Calu3 (cell line): ENCODE measurements at regions of chr16 and their contacts with region 1.

Region 1: GRCh38 chr16:77374384-77374783 is 60.5 kb downstream of the ADAMTS18 start:
- DNase-seq: peak; percentile 21
- H3K4me3 Mint-ChIP-seq: no peak overlapping the region
- H3K27ac Mint-ChIP-seq: no peak overlapping the region
- H3K4me1 Mint-ChIP-seq: peaks cover 20% of the 10 kb centered on the region
- H3K27me3 Mint-ChIP-seq: no peaks in the 10 kb centered on the region
- CTCF ChIP-seq: no peak

Region 2: GRCh38 chr16:77359065-77359502 is 15.3 kb before region 1 on chr16:
- CTCF ChIA-PET with region 1: interaction called, 8 read pairs
- intact Hi-C with region 1: loop called (anchors 2 kb)
- DNase-seq: peak; percentile 55
- H3K4me3 Mint-ChIP-seq: peak overlapping the region; percentile 33
- H3K27ac Mint-ChIP-seq: peak overlapping the region; percentile 74
- H3K4me1 Mint-ChIP-seq: peaks cover 51% of the 10 kb centered on the region
- H3K27me3 Mint-ChIP-seq: no peaks in the 10 kb centered on the region
- CTCF ChIP-seq: no peak

Region 3: GRCh38 chr16:77584205-77584859 is 209.9 kb after region 1 on chr16:
- CTCF ChIA-PET with region 1: no interaction called
- intact Hi-C with region 1: loop called (anchors 5 kb)
- DNase-seq: peak; percentile 61
- H3K4me3 Mint-ChIP-seq: no peak overlapping the region
- H3K27ac Mint-ChIP-seq: no peak overlapping the region
- H3K4me1 Mint-ChIP-seq: no peaks in the 10 kb centered on the region
- H3K27me3 Mint-ChIP-seq: peaks cover 65% of the 10 kb centered on the region
- CTCF ChIP-seq: peak; percentile 87